Activated CD4-positive, alpha-beta T cell treated with anti-CD3 and anti-CD28 coated beads for 36 hours (primary cell): ENCODE measurements at regions of chr11 and their contacts with region 1.

Region 1: DNA sequence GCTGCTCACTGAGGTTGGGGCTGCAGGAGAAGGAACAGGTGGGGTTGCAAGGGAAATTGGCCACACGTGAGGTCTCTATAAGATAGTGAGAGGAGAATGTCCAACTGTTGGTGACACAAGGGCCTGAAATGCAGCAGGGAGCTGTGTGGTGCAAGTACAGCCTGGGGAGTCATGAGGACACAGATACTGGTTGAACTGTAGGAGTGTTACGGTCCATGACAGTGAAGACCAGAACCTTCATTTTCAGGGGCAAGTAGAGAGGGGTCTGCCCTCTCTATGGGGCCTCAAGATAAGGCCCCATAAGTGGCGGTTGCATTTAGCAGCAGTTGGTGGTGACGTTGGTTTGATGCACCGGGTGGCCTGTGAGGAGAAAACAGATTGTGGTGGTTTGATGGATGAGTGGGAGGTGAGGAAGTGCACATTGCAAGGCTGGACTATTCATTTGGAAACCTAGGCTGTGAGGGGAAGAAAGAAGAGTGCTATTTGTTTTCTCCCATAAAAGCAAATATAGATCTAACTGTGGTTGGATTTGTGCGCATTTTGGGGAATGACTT is 39.4 kb downstream of the MICAL2 start:
- DNase-seq: peak; percentile 81
- ATAC-seq: peak; percentile 52
- H3K4me3 Mint-ChIP-seq: peak overlapping the region; percentile 54
- H3K27ac Mint-ChIP-seq: peak overlapping the region; percentile 95
- H3K4me1 Mint-ChIP-seq: peaks cover 63% of the 10 kb centered on the region
- H3K27me3 Mint-ChIP-seq: no peaks in the 10 kb centered on the region

Region 2: GRCh38 chr11:11931461-11932055 is 218.2 kb before region 1 on chr11:
- CTCF ChIA-PET with region 1: no interaction called
- POLR2A ChIA-PET with region 1: no interaction called
- intact Hi-C with region 1: no loop called
- DNase-seq: peak; percentile 10
- ATAC-seq: no peak
- H3K4me3 Mint-ChIP-seq: no peak overlapping the region
- H3K27ac Mint-ChIP-seq: no peak overlapping the region
- H3K4me1 Mint-ChIP-seq: no peaks in the 10 kb centered on the region
- H3K27me3 Mint-ChIP-seq: no peaks in the 10 kb centered on the region

Region 3: GRCh38 chr11:12052676-12053605 is 96.8 kb before region 1 on chr11:
- CTCF ChIA-PET with region 1: interaction called, 3 read pairs
- POLR2A ChIA-PET with region 1: interaction called, 4 read pairs
- intact Hi-C with region 1: loop called in 1 of 2 experiments (anchors 5 kb)
- DNase-seq: peak; percentile 54
- ATAC-seq: peak; percentile 60
- H3K4me3 Mint-ChIP-seq: no peak overlapping the region
- H3K27ac Mint-ChIP-seq: no peak overlapping the region
- H3K4me1 Mint-ChIP-seq: peaks cover 4% of the 10 kb centered on the region
- H3K27me3 Mint-ChIP-seq: no peaks in the 10 kb centered on the region

Region 4: DNA sequence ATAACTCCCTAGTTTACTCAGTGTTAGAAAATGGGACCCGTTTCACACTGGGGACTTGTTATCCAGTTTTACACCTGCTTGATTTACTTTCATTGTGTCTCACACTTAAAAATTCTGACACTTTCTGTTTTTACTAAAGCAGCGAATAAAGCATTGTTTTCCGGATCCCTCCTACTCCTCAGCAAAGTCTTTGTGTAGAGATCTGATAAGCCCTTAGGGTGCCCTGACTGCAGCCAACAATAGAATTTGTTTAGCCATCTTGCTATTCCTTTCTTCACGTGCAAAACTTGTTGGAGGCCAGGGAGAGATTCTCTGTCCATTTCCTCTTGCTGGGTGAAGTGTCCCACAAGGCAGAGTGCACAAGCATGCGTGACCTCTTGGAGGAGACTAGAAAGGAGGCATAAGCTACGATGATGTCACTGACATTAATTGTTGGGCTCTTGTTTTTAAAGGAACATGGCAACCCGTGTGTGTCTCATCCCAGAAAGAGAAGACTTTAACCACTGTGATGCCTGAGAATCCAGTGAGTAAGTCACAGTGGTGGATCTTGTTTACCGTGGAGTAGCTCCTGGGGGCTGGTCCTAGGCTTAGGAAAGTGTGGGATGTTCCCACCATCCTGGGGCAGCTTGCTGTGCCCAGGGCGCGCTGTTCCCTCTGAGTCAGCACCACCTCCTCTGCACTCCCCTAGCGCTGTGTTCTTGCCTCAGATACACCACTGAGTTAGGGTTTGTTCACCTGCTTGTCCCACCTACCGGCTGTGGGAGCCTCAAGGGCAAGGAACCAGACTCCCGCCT is 11.6 kb before region 1 on chr11:
- CTCF ChIA-PET with region 1: interaction called, 7 read pairs
- POLR2A ChIA-PET with region 1: interaction called, 10 read pairs
- intact Hi-C with region 1: loop called in 1 of 2 experiments (anchors 2 kb)
- DNase-seq: no peak
- ATAC-seq: peak; percentile 54
- H3K4me3 Mint-ChIP-seq: no peak overlapping the region
- H3K27ac Mint-ChIP-seq: peak overlapping the region; percentile 86
- H3K4me1 Mint-ChIP-seq: peaks cover 75% of the 10 kb centered on the region
- H3K27me3 Mint-ChIP-seq: no peaks in the 10 kb centered on the region

Region 5: GRCh38 chr11:12185914-12186313 is 36.2 kb after region 1 on chr11:
- CTCF ChIA-PET with region 1: interaction called, 7 read pairs
- POLR2A ChIA-PET with region 1: interaction called, 30 read pairs
- intact Hi-C with region 1: loop called (anchors 1 kb)
- DNase-seq: no peak
- ATAC-seq: no peak
- H3K4me3 Mint-ChIP-seq: no peak overlapping the region
- H3K27ac Mint-ChIP-seq: peak overlapping the region; percentile 43
- H3K4me1 Mint-ChIP-seq: peaks cover 47% of the 10 kb centered on the region
- H3K27me3 Mint-ChIP-seq: no peaks in the 10 kb centered on the region

Region 6: DNA sequence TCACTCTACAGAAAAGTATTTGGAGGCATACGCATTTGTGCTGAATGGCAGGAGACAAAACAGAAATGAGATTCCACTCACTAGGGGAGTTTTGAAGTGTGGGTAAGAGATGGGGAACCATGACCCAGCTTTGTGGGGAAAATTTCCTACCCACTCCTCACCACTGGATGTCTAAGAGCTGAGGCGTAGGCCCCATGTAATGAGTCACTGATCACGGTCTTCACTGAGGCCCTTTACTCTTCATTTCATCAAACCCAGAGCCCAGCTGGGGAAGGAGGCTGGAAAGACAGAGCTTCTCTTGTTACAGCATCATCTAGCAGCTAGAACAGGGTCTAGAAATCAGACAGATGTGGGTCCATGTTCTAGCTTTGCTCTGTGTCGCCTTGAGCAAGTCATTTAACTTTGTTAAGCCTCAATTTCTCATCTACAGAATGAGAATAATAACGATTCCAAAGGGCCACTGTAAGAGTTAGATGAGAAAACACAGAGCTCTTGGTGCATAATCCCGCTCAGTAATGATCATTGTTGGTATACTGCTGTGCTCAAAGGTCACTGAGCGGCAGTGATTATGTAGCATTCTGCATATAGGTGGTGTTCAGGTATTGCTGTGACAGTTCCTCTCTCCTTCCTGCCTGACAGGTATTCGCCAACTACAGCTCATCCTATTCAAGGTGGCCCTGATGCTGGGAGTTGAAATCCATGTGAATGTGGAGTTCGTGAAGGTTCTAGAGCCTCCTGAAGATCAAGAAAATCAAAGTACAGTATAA is 57.8 kb after region 1 on chr11:
- CTCF ChIA-PET with region 1: interaction called, 4 read pairs
- POLR2A ChIA-PET with region 1: interaction called, 20 read pairs
- intact Hi-C with region 1: loop called (anchors 1 to 2 kb)
- DNase-seq: peak; percentile 80
- ATAC-seq: peak; percentile 85
- H3K4me3 Mint-ChIP-seq: peak overlapping the region; percentile 50
- H3K27ac Mint-ChIP-seq: peak overlapping the region; percentile 92
- H3K4me1 Mint-ChIP-seq: peaks cover 69% of the 10 kb centered on the region
- H3K27me3 Mint-ChIP-seq: no peaks in the 10 kb centered on the region

Region 7: DNA sequence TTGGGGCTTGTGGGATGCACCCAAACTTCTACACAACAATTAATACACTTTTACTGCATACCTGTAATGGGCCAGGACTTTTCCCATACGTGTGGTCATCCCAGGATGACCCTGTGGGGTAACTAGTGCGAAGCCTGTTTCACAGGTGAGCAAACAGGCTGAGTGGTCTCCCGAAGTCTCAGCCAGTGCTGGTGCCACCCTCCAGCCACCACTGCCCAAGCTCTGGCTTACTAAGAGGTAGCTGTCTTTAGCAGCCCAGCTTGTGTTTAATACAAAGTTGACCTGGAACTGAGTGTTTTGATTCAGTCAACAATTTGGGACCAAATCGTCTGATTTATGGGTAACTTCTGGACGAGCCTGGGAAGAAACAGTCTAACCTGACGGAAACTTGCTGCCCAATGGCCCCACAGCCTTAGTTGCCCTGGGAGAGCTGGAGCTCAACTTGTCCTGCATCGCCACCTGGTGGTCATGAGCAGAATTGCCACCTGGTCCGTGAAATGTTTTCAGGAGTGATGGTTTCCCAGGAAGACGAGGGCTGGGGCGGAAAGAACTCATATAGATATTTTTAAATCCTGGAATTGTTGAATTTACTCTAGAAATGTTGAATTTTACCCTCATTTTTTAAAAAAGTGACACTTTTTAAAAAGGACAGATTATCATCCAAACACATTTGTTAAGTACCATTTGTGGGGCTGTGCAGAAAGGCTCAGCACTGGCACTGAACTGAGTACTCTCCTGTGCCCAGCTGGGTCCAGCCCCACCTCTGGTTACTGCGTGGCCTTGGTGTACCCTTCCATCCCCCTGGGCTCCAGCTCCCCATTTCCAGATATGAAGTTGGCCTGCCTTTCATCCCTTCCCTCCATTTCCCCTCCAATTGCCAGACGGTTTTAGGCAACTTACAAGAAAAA is 132.1 kb after region 1 on chr11:
- CTCF ChIA-PET with region 1: interaction called, 3 read pairs
- POLR2A ChIA-PET with region 1: interaction called, 5 read pairs
- intact Hi-C with region 1: loop called in 1 of 2 experiments (anchors 5 kb)
- DNase-seq: peak; percentile 89
- ATAC-seq: peak; percentile 76
- H3K4me3 Mint-ChIP-seq: no peak overlapping the region
- H3K27ac Mint-ChIP-seq: peak overlapping the region; percentile 14
- H3K4me1 Mint-ChIP-seq: peaks cover 18% of the 10 kb centered on the region
- H3K27me3 Mint-ChIP-seq: no peaks in the 10 kb centered on the region